KBM-7 (cell line): ENCODE measurements at regions of chr1 and their contacts with region 1.

Region 1: GRCh38 chr1:68346188-68346808 is 103.5 kb downstream of the RPE65 start:
- DNase-seq: peak; percentile 57

Region 2: DNA sequence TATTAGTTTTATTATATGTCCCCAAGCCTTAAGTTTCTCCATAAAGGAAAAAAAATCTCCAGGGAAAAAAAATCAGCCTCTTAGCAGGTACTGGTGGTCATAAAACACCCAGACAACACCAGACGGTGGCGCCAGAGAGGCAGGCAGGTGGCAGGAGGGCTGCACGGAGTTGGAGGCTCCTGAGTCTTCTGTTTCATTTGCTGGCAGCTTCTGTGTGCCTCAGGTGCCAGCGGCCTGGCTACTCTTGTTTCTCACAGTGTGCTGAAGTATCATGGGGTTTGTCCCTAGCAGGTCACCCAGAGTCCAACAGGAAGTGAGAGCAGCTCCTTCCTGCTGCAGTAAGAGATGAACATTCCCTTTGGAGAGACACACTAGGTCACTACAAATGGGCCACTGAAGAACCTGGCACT is 784.6 kb before region 1 on chr1:
- in situ Hi-C with region 1: loop called (anchors 25 kb)
- DNase-seq: peak; percentile 75